ENCODE measurements at regions of chr11 and their contacts with region 1.

Region 1: GRCh38 chr11:45872513-45873356 is 12.7 kb upstream of the MAPK8IP1 start:
- DNase-seq: peak; percentile 51 to 66
- ATAC-seq: peak; percentile 80 to 88 (median 86)
- H3K4me3 ChIP-seq: no peak overlapping the region
- H3K27ac ChIP-seq: no peak overlapping the region
- H3K4me1 ChIP-seq: no peaks in the 10 kb centered on the region
- H3K27me3 ChIP-seq: no peaks in the 10 kb centered on the region
- CTCF ChIP-seq: peak; percentile 67

Region 2: DNA sequence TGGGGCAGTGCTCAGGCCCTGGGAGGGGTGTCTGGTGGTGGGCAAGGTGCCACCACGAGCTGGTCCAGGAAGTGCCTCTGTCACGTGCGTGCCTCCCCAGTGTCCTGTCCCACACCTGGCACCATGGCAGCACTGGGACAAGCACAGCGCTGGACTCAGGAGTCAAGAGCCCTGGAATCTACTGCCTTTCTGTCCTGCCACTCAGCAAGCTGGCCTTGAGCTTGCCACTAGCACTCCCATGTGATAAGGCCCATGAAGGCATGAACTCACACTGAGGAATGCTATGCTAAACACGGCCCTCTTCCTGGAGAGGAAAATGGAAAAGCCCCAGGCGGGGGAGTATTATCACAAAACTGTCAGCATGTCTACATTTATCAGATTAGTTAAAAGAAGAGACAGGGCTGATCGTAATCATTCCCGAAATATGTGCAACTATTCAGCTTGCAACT is 118.5 kb before region 1 on chr11:
- intact Hi-C with region 1: no loop called
- DNase-seq: no peak
- ATAC-seq: peak; percentile 18 to 59 (median 40)
- H3K4me3 ChIP-seq: no peak overlapping the region
- H3K27ac ChIP-seq: no peak overlapping the region
- H3K4me1 ChIP-seq: no peaks in the 10 kb centered on the region
- H3K27me3 ChIP-seq: no peaks in the 10 kb centered on the region
- CTCF ChIP-seq: no peak

Region 3: GRCh38 chr11:45917623-45918330 is 45.0 kb after region 1 on chr11 and contains the start of gene PEX16:
- intact Hi-C with region 1: loop called (anchors 5 to 10 kb)
- DNase-seq: peak; percentile 97 to 99
- ATAC-seq: peak; percentile 91 to 96 (median 95)
- H3K4me3 ChIP-seq: peak within 1 kb of the TSS; percentile 100
- H3K27ac ChIP-seq: peak within 1 kb of the TSS; percentile 97
- H3K4me1 ChIP-seq: peaks cover 21% of the 10 kb centered on the region
- H3K27me3 ChIP-seq: peaks cover 0 to 10% (median 9%) of the 10 kb centered on the region in 3 donors
- CTCF ChIP-seq: no peak
- total RNA-seq, gene PEX16: 12.1 to 23.5 (median 14.2) TPM

Region 4: DNA sequence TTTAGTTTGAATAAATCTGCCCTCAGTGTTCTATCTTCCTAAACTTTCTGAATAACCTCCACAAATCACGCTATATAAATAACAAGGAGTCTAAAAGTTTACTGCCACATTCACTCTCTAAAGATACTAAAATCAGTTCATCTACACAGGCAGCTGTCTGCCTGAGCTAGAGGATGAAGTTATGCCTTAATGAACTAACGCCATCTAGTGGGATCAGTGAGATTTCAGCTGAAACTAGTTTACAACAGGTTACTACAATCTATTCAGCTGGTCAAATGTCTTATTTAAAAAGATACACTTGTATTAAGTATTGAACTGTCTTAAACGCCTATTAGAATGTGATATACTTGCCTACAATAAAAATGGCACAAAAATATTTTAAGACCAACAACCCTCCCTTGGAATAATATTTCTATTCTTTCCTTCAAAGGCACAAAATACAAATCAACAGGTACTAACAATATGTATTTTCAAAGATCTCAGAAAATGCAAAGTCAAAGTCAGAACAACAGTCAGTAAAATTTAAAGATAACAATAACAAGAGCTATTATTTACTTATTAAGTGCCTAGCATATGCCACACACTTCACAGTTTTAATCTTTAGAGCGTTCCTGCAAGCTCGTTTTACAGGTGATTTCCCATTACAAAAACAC is 133.8 kb after region 1 on chr11:
- intact Hi-C with region 1: loop called in 1 of 2 experiments (anchors 5 kb)
- DNase-seq: no peak
- ATAC-seq: peak; percentile 65 to 93 (median 80)
- H3K4me3 ChIP-seq: no peak overlapping the region
- H3K27ac ChIP-seq: no peak overlapping the region
- H3K4me1 ChIP-seq: peaks cover 10% of the 10 kb centered on the region
- H3K27me3 ChIP-seq: no peaks in the 10 kb centered on the region
- CTCF ChIP-seq: peak; percentile 82

Region 5: GRCh38 chr11:46100670-46101069 is 227.9 kb after region 1 on chr11:
- intact Hi-C with region 1: loop called in 1 of 2 experiments (anchors 10 kb)
- DNase-seq: no peak
- ATAC-seq: no peak
- H3K4me3 ChIP-seq: peak overlapping the region; percentile 37
- H3K27ac ChIP-seq: no peak overlapping the region
- H3K4me1 ChIP-seq: peaks cover 45% of the 10 kb centered on the region
- H3K27me3 ChIP-seq: no peaks in the 10 kb centered on the region
- CTCF ChIP-seq: no peak